ENCODE measurements at regions of chr18 and their contacts with region 1.

Region 1: GRCh38 chr18:32714571-32715148 is 58.2 kb downstream of the KLHL14 start:
- DNase-seq: peak; percentile 19 to 56
- H3K4me3 ChIP-seq: no peak overlapping the region
- H3K27ac ChIP-seq: no peak overlapping the region
- H3K4me1 ChIP-seq: no peaks in the 10 kb centered on the region
- H3K27me3 ChIP-seq: no peaks in the 10 kb centered on the region
- CTCF ChIP-seq: peak in 2 of 3 experiments; percentile 79 to 81; a peak in 3 of 4 replicates
- EP300 ChIP-seq: no peak
- POLR2A ChIP-seq: no peak
- RAD21 ChIP-seq: peak; percentile 87 to 93

Region 2: GRCh38 chr18:32549248-32550110 is 165.2 kb before region 1 on chr18:
- CTCF ChIA-PET with region 1: no interaction called
- POLR2A ChIA-PET with region 1: no interaction called
- DNase-seq: peak; percentile 19 to 58
- H3K4me3 ChIP-seq: no peak overlapping the region; a peak in 1 of 8 replicates
- H3K27ac ChIP-seq: no peak overlapping the region
- H3K4me1 ChIP-seq: peaks cover 0 to 10% (median 7%) of the 10 kb centered on the region in 4 experiments; a peak in 5 of 7 replicates
- H3K27me3 ChIP-seq: no peaks in the 10 kb centered on the region
- CTCF ChIP-seq: peak; percentile 70 to 87 (median 70)
- EP300 ChIP-seq: no peak
- POLR2A ChIP-seq: no peak
- RAD21 ChIP-seq: peak; percentile 91

Region 3: DNA sequence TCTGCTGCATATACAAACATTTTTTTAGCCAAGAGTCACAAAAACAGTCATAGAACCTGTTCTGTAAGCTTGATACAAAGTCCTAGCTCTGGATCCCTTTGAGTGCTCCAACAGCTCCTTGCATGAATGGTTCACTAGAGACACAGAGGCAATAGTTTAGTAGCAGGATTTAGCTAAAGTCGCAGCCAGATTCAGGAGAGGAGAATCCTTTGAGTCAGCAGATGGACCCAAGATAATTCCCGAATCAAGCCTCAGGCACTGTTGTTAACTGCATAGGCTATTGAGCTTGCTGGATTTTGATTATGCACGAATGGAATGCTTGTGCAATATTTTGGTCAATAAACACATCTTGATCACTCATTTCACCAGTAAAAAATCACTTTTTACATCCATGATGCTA is 90.4 kb before region 1 on chr18:
- CTCF ChIA-PET with region 1: no interaction called
- POLR2A ChIA-PET with region 1: no interaction called
- DNase-seq: no peak
- H3K4me3 ChIP-seq: no peak overlapping the region
- H3K27ac ChIP-seq: no peak overlapping the region
- H3K4me1 ChIP-seq: no peaks in the 10 kb centered on the region
- H3K27me3 ChIP-seq: peaks cover 0 to 1% (median 0%) of the 10 kb centered on the region in 4 experiments; a peak in 1 of 7 replicates
- CTCF ChIP-seq: no peak
- EP300 ChIP-seq: no peak
- POLR2A ChIP-seq: no peak
- RAD21 ChIP-seq: no peak

Region 4: GRCh38 chr18:32742579-32742978 is 27.9 kb after region 1 on chr18:
- CTCF ChIA-PET with region 1: interaction called, 20 read pairs
- POLR2A ChIA-PET with region 1: no interaction called
- DNase-seq: no peak
- H3K4me3 ChIP-seq: no peak overlapping the region
- H3K27ac ChIP-seq: no peak overlapping the region
- H3K4me1 ChIP-seq: peaks cover 1 to 13% (median 9%) of the 10 kb centered on the region in 4 experiments; a peak in 4 of 7 replicates
- H3K27me3 ChIP-seq: no peaks in the 10 kb centered on the region
- CTCF ChIP-seq: no peak
- EP300 ChIP-seq: no peak
- POLR2A ChIP-seq: no peak
- RAD21 ChIP-seq: no peak

Region 5: GRCh38 chr18:32771169-32771751 is 56.6 kb after region 1 on chr18:
- CTCF ChIA-PET with region 1: interaction called, 15 read pairs
- POLR2A ChIA-PET with region 1: no interaction called
- DNase-seq: peak in 1 of 2 experiments; percentile 68
- H3K4me3 ChIP-seq: peak overlapping the region; percentile 44 to 90 (median 68)
- H3K27ac ChIP-seq: no peak overlapping the region
- H3K4me1 ChIP-seq: peaks cover 7 to 23% (median 15%) of the 10 kb centered on the region in 4 experiments
- H3K27me3 ChIP-seq: peaks cover 10 to 49% (median 40%) of the 10 kb centered on the region in 4 experiments
- CTCF ChIP-seq: no peak
- EP300 ChIP-seq: no peak
- POLR2A ChIP-seq: no peak
- RAD21 ChIP-seq: no peak

Region 6: DNA sequence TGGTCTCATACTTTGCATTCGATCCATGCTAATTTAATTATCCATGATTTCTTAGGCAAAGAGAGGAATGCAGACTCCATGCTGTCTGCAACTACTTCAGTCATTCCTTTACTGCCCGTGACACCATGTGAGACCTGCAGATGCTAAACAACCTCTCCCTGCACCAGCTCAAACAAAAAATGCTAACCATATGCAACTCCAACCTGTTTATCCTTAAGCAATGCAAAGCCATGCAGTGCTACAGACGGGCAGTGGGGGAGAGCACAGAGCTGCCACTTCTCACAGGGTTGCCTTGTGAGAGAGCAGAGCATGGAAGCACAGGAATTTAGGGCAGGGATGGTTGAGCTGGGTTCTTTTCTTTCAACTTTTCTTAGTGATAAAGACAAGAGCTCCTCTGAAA is 133.0 kb after region 1 on chr18:
- CTCF ChIA-PET with region 1: interaction called, 10 read pairs
- POLR2A ChIA-PET with region 1: no interaction called
- DNase-seq: peak in 1 of 2 experiments; percentile 17
- H3K4me3 ChIP-seq: no peak overlapping the region
- H3K27ac ChIP-seq: no peak overlapping the region
- H3K4me1 ChIP-seq: peaks cover 0 to 13% (median under 1%) of the 10 kb centered on the region in 4 experiments; a peak in 2 of 7 replicates
- H3K27me3 ChIP-seq: no peaks in the 10 kb centered on the region
- CTCF ChIP-seq: peak in 2 of 3 experiments; percentile 5 to 51; a peak in 2 of 4 replicates
- EP300 ChIP-seq: no peak
- POLR2A ChIP-seq: peak in 1 of 2 experiments; percentile 41; a peak in 1 of 3 replicates
- RAD21 ChIP-seq: peak; percentile 52 to 54; a peak in 3 of 4 replicates

Region 7: DNA sequence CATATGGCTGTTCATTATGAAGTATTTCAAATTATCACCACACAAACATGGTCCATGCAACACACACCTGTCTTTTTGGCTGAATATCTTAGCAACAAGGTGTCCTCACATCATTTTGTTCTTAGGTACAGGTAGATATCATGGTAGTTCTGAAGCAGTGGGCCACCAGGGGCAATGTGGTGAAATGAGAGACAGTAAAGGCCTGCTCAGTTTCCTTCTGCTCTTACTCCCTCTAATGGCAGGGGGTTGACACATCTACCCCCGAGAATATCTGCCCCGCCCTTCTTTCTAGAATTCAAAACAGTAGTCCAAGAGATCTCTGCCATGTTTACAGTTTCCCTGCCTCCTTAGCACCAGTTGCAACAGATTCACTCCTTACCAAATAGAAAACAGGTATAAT is 205.1 kb after region 1 on chr18:
- CTCF ChIA-PET with region 1: interaction called, 18 read pairs
- POLR2A ChIA-PET with region 1: no interaction called
- DNase-seq: peak; percentile 39 to 53
- H3K4me3 ChIP-seq: no peak overlapping the region
- H3K27ac ChIP-seq: no peak overlapping the region
- H3K4me1 ChIP-seq: no peaks in the 10 kb centered on the region
- H3K27me3 ChIP-seq: no peaks in the 10 kb centered on the region
- CTCF ChIP-seq: peak; percentile 54 to 99 (median 95)
- EP300 ChIP-seq: no peak
- POLR2A ChIP-seq: no peak
- RAD21 ChIP-seq: peak; percentile 94